Vagina (tissue), 2 donors: ENCODE measurements at regions of chr2 and their contacts with region 1.

Region 1: DNA sequence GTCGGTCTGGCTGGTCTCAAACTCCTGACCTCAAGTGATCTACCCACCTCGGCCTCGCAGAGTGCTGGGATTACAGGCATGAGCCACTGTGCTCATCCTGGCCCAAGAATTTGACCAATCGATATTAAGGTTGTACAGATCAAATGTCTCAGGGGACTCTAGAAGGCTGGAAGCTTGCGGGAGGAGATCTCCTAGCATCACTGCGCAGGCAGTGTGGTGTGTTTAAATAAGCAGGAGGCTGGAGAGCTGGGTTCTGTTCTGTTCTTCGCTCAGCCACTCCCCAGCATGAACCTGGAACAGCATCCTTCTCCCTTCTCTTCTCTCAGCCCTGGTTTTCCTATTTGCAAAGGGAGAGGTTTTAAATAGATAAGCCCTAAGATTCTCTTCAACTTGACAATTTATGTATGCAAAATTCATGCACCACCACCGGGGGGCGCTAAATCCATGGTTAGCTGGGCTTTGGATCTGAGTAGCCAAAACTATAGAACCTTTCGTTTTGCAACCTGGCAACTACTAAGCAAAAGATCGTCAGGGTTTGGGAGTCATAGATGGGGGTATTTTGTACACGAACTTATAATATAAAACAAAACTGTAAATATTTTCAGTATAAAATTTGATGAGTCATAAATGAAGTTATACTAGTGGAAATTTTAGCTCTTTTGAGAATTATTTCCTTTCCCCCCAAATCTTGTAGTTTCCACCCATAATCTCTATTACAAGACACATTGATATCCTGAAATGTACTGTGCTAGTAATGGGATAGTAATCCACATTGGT is 60.6 kb downstream of the SLC16A14 start:
- DNase-seq: no peak
- H3K4me3 ChIP-seq: no peak overlapping the region
- H3K27ac ChIP-seq: no peak overlapping the region
- H3K4me1 ChIP-seq: peaks cover 9% of the 10 kb centered on the region
- H3K27me3 ChIP-seq: no peaks in the 10 kb centered on the region
- CTCF ChIP-seq: peak; percentile 60 to 82 (median 61)
- POLR2A ChIP-seq: no peak

Region 2: GRCh38 chr2:229282758-229283546 is 725.2 kb before region 1 on chr2:
- intact Hi-C with region 1: no loop called
- DNase-seq: no peak
- H3K4me3 ChIP-seq: no peak overlapping the region
- H3K27ac ChIP-seq: no peak overlapping the region
- H3K4me1 ChIP-seq: no peaks in the 10 kb centered on the region
- H3K27me3 ChIP-seq: no peaks in the 10 kb centered on the region
- CTCF ChIP-seq: no peak
- POLR2A ChIP-seq: no peak

Region 3: DNA sequence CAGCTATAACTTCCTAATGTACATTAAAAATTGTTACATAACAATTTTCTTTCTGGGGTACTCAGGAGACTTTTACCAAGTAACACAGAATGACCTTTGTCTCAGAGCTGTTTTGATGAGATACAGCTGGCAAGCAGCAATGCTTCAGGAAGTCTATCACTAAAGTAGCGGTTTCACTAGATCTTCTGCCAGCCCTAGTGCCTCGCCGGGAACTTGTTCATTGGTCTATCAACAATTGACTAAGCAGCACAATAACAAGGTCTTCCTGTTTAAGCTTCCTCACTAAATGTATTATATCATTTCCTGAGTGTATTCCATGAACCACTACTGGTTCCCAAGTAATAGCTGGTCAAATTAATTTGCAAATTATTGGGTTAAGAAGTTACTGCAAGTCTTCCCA is 155.6 kb before region 1 on chr2:
- intact Hi-C with region 1: no loop called
- DNase-seq: no peak
- H3K4me3 ChIP-seq: no peak overlapping the region
- H3K27ac ChIP-seq: no peak overlapping the region
- H3K4me1 ChIP-seq: peaks cover 41% of the 10 kb centered on the region
- H3K27me3 ChIP-seq: no peaks in the 10 kb centered on the region
- CTCF ChIP-seq: no peak
- POLR2A ChIP-seq: no peak

Region 4: GRCh38 chr2:230160112-230160660 is 152.1 kb after region 1 on chr2:
- intact Hi-C with region 1: loop called (anchors 2 kb)
- DNase-seq: no peak
- H3K4me3 ChIP-seq: no peak overlapping the region
- H3K27ac ChIP-seq: no peak overlapping the region
- H3K4me1 ChIP-seq: no peaks in the 10 kb centered on the region
- H3K27me3 ChIP-seq: no peaks in the 10 kb centered on the region
- CTCF ChIP-seq: peak; percentile 63 to 87 (median 69)
- POLR2A ChIP-seq: no peak

Region 5: DNA sequence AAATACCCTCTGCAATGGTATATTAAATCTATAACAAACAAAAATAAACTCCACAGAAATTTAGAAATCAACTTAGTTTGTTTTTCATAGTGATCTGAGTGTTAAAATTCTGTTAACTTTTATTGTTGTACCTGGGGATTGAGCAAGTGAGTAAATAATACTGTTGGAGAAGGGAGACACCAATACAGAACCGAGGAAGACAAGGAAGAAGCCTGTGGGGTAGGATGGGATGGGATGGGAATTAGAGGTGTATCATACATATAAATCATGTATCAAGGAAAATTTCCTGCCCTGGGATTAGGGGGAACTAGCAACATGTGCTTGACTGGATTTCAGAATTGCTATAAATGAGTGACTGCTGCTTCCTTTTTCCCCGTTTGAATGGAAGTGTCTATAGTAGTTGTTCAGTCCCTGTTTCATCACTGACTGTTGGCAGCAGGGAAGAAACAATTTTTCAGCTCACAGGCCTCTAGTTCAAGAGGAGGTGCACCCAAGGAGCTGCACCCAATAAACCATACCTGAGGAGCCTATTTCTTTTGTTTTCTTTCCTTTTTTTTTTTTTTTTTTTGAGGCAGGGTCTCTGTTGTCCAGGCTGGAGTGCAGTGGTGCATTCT is 158.5 kb after region 1 on chr2:
- intact Hi-C with region 1: loop called (anchors 2 kb)
- DNase-seq: no peak
- H3K4me3 ChIP-seq: no peak overlapping the region
- H3K27ac ChIP-seq: no peak overlapping the region
- H3K4me1 ChIP-seq: peaks cover 12% of the 10 kb centered on the region
- H3K27me3 ChIP-seq: no peaks in the 10 kb centered on the region
- CTCF ChIP-seq: no peak
- POLR2A ChIP-seq: no peak